Brain microvascular endothelial cell (primary cell): ENCODE measurements at regions of chr1 and their contacts with region 1.

Region 1: GRCh38 chr1:66242646-66243547 is 291.1 kb upstream of the SGIP1 start:
- DNase-seq: peak; percentile 87
- H3K4me3 ChIP-seq: no peak overlapping the region
- H3K27ac ChIP-seq: peak overlapping the region; percentile 71
- H3K27me3 ChIP-seq: no peaks in the 10 kb centered on the region
- CTCF ChIP-seq: peak; percentile 100

Region 2: GRCh38 chr1:65958561-65959350 is 284.1 kb before region 1 on chr1:
- in situ Hi-C with region 1: loop called (anchors 25 kb)
- DNase-seq: peak; percentile 54
- H3K4me3 ChIP-seq: no peak overlapping the region
- H3K27ac ChIP-seq: no peak overlapping the region
- H3K27me3 ChIP-seq: no peaks in the 10 kb centered on the region
- CTCF ChIP-seq: peak; percentile 52

Region 3: DNA sequence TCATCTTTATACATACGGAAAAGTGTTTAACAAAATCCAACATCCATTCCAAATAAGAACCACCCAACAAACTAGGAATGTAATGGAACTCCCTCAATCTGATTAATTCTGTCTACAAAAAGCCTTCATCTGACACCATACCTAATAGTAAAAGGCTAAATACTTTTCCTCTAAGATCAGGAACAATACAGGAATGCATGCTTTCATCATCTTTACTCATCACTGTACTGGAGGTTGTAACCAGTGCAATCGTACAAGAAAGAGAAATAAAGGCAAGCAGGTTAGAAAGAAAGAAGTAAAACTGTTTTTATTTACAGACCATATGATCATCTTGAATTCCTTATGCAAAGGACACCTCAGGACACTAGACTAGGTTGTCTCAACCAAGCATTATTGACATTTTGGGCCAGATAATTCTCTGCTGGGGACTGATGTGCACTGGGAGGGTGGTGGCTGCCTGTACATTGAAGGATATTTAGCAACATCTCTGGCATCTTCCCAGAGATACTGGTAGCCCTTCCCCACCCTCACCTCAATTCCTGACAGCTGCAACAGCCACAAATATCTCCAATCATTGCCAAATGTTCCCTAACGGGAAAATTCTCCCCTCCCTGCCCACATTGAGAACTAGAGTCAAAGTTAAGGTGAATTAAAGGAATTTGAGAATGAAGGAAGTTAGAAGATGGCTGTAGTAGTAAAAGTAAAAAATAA is 588.8 kb after region 1 on chr1:
- in situ Hi-C with region 1: no loop called
- DNase-seq: no peak
- H3K4me3 ChIP-seq: no peak overlapping the region
- H3K27ac ChIP-seq: no peak overlapping the region
- H3K27me3 ChIP-seq: no peaks in the 10 kb centered on the region
- CTCF ChIP-seq: no peak